ENCODE measurements at regions of chr2 and their contacts with region 1.

Region 1: GRCh38 chr2:17470855-17471641 is 47.2 kb downstream of the RAD51AP2 start:
- DNase-seq: peak; percentile 92
- H3K4me3 ChIP-seq: no peak overlapping the region
- H3K27ac ChIP-seq: no peak overlapping the region
- H3K4me1 ChIP-seq: no peaks in the 10 kb centered on the region
- H3K27me3 ChIP-seq: no peaks in the 10 kb centered on the region
- CTCF ChIP-seq: peak; percentile 72

Region 2: GRCh38 chr2:17538844-17539554 is 68.0 kb after region 1 on chr2:
- CTCF ChIA-PET with region 1: interaction called, 7 read pairs
- POLR2A ChIA-PET with region 1: no interaction called
- intact Hi-C with region 1: loop called (anchors 5 kb)
- DNase-seq: peak; percentile 93
- H3K4me3 ChIP-seq: peak overlapping the region; percentile 64
- H3K27ac ChIP-seq: peak overlapping the region; percentile 29
- H3K4me1 ChIP-seq: peaks cover 3% of the 10 kb centered on the region
- H3K27me3 ChIP-seq: no peaks in the 10 kb centered on the region
- CTCF ChIP-seq: 0 out of 2 replicates have a peak, but pooled peaks have one; percentile 10

Region 3: DNA sequence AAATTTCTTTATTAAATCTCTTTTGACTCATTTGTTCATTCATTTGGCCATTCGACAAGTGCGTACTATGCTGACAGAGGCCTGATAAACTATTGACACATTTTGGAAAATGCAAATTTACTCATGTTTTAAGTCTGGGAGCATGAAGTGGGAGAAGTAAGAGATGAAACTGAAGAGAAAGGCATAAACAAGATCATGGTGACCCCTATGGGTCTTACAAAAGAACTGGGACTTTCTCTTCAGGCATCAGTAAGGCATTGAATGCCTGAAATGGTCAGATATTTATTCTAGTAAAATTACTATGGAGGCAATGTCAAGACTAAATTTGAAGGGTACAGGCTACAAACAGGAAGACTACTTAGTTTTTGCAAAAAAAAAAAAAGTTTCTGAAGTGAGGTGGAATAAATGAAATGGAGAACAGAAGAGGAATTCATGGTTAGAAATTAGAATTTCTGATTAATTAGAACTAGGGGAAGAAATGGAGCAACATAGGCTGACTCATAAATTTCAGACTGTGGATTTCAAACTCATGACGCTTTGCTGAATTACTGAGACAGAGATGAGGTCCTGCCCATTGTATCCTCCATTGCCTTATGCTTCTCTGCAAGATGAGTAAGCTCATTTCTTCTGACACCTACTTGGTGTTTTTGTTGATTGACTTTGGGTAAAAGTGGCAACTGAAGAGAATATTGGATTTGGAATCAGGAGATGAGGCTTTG is 102.2 kb after region 1 on chr2:
- CTCF ChIA-PET with region 1: no interaction called
- POLR2A ChIA-PET with region 1: no interaction called
- intact Hi-C with region 1: loop called (anchors 5 kb)
- DNase-seq: peak; percentile 24
- H3K4me3 ChIP-seq: no peak overlapping the region
- H3K27ac ChIP-seq: no peak overlapping the region
- H3K4me1 ChIP-seq: no peaks in the 10 kb centered on the region
- H3K27me3 ChIP-seq: no peaks in the 10 kb centered on the region
- CTCF ChIP-seq: peak; percentile 46

Region 4: GRCh38 chr2:17672583-17673317 is 201.7 kb after region 1 on chr2:
- CTCF ChIA-PET with region 1: interaction called, 25 read pairs
- POLR2A ChIA-PET with region 1: interaction called, 3 read pairs
- intact Hi-C with region 1: loop called (anchors 1 kb)
- DNase-seq: no peak
- H3K4me3 ChIP-seq: no peak overlapping the region
- H3K27ac ChIP-seq: no peak overlapping the region
- H3K4me1 ChIP-seq: no peaks in the 10 kb centered on the region
- H3K27me3 ChIP-seq: no peaks in the 10 kb centered on the region
- CTCF ChIP-seq: no peak

Region 5: DNA sequence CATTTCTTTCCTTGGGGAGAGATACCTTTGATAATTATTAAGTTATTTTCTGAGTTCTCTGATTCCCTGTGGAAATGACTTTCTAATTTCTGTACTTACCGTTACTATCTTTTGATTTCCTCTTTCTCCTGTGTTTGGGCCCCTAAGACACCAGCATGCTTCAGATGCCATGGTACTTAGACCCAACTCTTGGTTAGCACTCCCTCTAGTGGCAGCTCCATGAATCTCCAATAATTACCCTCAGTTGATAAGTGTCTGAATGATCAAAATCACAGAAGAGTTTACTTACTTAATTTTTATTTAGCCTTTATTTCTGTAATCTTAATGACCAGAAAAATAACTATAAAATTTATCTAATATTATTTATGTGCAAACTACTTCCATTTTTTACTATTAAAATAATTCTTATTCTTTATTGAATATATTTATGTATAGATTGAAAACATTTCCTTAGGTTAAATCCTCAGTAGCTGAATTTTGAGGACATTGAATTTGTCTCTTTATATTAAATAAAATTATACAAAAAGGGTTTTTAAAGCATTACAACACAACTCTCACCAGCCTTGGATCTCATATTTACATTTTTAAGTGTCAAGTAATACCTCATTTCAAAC is 707.8 kb after region 1 on chr2:
- CTCF ChIA-PET with region 1: interaction called, 5 read pairs
- POLR2A ChIA-PET with region 1: no interaction called
- intact Hi-C with region 1: loop called (anchors 10 kb)
- DNase-seq: peak; percentile 85
- H3K4me3 ChIP-seq: no peak overlapping the region
- H3K27ac ChIP-seq: peak overlapping the region; percentile 81
- H3K4me1 ChIP-seq: peaks cover 31% of the 10 kb centered on the region
- H3K27me3 ChIP-seq: no peaks in the 10 kb centered on the region
- CTCF ChIP-seq: peak; percentile 87

Region 6: DNA sequence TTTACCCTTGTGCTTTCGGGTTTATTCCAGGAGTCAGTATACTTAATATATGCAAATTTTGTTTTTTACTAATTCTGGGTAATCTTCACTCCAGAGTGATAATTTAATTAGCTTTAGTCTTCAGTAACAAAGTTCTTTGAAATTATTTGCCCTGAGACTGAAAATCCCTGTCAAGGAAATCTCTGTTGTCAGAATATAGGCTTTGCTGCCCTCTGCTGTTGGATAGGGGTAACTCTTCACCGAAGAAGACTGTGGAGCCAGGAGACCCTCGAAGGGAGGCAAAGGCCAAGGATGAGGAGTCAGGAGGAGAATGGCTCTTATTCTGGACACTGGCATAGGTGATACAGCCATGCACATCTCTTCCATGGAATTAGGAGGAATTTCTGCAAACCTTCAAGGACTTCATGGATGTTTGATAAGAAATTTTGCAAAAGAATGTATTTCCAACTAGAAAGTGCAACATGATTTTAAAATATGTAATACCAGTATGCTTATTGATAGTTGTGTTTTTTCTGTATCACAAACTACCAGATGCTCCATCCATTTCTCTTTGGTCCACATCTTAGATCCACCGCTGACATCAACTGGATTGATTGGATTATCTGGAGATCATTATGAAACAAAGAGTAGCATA is 907.1 kb after region 1 on chr2:
- CTCF ChIA-PET with region 1: interaction called, 3 read pairs
- POLR2A ChIA-PET with region 1: no interaction called
- intact Hi-C with region 1: loop called (anchors 5 kb)
- DNase-seq: peak; percentile 82
- H3K4me3 ChIP-seq: no peak overlapping the region
- H3K27ac ChIP-seq: peak overlapping the region; percentile 63
- H3K4me1 ChIP-seq: peaks cover 58% of the 10 kb centered on the region
- H3K27me3 ChIP-seq: no peaks in the 10 kb centered on the region
- CTCF ChIP-seq: peak; percentile 87

Region 7: GRCh38 chr2:18749912-18750526 is 1279.0 kb after region 1 on chr2:
- CTCF ChIA-PET with region 1: interaction called, 11 read pairs
- POLR2A ChIA-PET with region 1: no interaction called
- intact Hi-C with region 1: no loop called
- DNase-seq: peak; percentile 65
- H3K4me3 ChIP-seq: no peak overlapping the region
- H3K27ac ChIP-seq: no peak overlapping the region
- H3K4me1 ChIP-seq: no peaks in the 10 kb centered on the region
- H3K27me3 ChIP-seq: peaks cover 6% of the 10 kb centered on the region
- CTCF ChIP-seq: peak; percentile 88

Measured in A673 (cell line).